Natural killer cell (primary cell): ENCODE measurements at regions of chr17 and their contacts with region 1.

Region 1: DNA sequence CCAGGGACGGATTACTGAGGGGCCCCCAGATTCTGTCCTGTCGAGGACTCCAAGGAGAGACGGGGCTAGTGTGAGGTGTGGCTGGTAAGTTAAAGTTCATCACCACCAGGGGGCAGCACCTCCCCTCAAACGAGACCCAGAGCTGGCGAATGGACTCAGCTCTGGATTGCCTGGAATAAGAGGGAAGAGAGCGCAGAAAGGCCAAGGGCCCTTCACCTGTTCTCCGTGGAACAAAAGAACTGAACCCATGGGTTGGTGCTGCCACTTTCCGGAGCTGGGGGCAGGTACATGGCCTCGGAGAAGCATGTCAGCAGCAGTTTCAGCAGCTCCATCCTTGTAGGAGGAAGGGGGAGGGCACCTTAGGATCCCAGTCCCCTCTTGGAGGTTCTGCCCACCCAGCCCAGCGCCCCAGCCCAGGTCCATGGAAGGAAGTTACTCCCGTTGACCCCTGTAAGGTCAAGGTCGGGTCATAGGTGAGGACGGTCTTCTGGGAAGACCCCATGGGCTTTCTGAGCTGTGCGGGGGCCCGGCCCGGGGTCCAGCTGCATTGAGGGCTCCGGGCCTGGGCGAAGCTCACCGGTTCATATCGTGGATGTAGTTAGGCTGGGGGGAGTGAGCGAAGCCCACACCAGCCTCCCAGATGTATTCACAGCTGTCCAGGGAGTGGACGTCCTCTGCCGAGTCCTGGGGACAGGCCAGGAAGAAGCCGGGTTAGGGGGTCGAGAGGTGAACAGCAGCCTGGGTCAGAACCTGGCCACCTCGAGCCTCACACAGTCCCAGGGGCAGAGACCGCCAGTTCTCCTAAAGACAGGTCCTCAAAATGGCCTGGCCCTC is 10.7 kb downstream of the HID1 start:
- DNase-seq: peak; percentile 76 to 92
- ATAC-seq: peak; percentile 75 to 80 (median 76)
- H3K4me3 ChIP-seq: no peak overlapping the region
- H3K4me3 Mint-ChIP-seq: no peak overlapping the region
- H3K27ac ChIP-seq: no peak overlapping the region
- H3K27ac Mint-ChIP-seq: no peak overlapping the region
- H3K4me1 ChIP-seq: peaks cover 8% of the 10 kb centered on the region
- H3K4me1 Mint-ChIP-seq: peaks cover 0 to 4% of the 10 kb centered on the region in 2 donors
- H3K27me3 ChIP-seq: no peaks in the 10 kb centered on the region
- H3K27me3 Mint-ChIP-seq: peaks cover 6 to 7% of the 10 kb centered on the region in 2 donors
- CTCF ChIP-seq: peak; percentile 89

Region 2: GRCh38 chr17:74790161-74791054 is 171.5 kb before region 1 on chr17:
- intact Hi-C with region 1: loop called (anchors 1 kb)
- DNase-seq: peak in 1 of 2 donors; percentile 33
- ATAC-seq: no peak
- H3K4me3 ChIP-seq: no peak overlapping the region
- H3K4me3 Mint-ChIP-seq: no peak overlapping the region
- H3K27ac ChIP-seq: no peak overlapping the region
- H3K27ac Mint-ChIP-seq: no peak overlapping the region
- H3K4me1 ChIP-seq: peaks cover 31% of the 10 kb centered on the region
- H3K4me1 Mint-ChIP-seq: peaks cover 12 to 25% of the 10 kb centered on the region in 2 donors
- H3K27me3 ChIP-seq: no peaks in the 10 kb centered on the region
- H3K27me3 Mint-ChIP-seq: no peaks in the 10 kb centered on the region
- CTCF ChIP-seq: no peak

Region 3: DNA sequence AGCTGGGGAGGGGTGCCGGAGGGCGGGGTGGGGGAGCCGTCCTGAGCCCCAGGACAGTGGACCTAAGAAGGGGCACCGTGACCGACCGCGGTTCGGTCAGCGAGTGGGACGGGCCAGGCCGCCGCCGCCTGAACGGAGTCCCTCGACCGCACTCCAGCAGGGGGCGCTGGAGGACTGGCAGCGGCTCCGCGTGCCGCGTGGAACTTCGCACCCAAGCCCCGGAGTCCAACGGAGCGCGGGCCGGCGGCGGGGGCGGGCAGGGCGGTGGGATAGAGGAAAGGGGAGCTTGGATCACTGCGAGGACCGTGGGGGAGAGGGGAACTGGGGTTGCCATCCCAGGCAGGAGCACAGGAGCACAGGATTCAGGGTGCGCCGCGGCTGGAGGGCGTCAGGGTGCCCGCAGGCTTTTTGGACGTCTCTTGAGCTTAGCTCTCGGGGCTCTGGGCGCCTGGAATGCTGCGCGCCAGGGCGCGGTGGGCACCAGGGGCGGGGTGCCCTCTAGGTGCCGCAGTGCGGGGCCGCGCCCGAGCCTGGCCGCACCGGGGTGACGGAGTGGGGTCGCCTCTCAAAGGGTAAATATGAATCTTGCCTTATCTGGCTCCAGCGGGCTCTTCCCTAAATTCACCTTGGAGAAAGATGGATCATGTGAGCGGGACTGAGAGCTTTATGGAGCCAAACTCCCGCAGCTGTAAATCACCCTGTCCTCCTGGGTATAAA is 38.2 kb before region 1 on chr17:
- intact Hi-C with region 1: loop called (anchors 5 kb)
- DNase-seq: peak; percentile 77 to 83
- ATAC-seq: peak; percentile 84 to 85 (median 84)
- H3K4me3 ChIP-seq: peak overlapping the region; percentile 20
- H3K4me3 Mint-ChIP-seq: no peak overlapping the region
- H3K27ac ChIP-seq: no peak overlapping the region
- H3K27ac Mint-ChIP-seq: no peak overlapping the region
- H3K4me1 ChIP-seq: peaks cover 23% of the 10 kb centered on the region
- H3K4me1 Mint-ChIP-seq: peaks cover 0 to 22% of the 10 kb centered on the region in 2 donors
- H3K27me3 ChIP-seq: peaks cover 37% of the 10 kb centered on the region
- H3K27me3 Mint-ChIP-seq: peaks cover 30 to 36% of the 10 kb centered on the region in 2 donors
- CTCF ChIP-seq: peak; percentile 88

Region 4: GRCh38 chr17:75012346-75013091 is 50.6 kb after region 1 on chr17 and contains the start of gene MRPL58:
- intact Hi-C with region 1: loop called (anchors 2 kb)
- DNase-seq: peak; percentile 81 to 88
- ATAC-seq: peak; percentile 93 to 95 (median 95)
- H3K4me3 ChIP-seq: peak within 1 kb of the TSS; percentile 76
- H3K4me3 Mint-ChIP-seq: peak within 1 kb of the TSS; percentile 95
- H3K27ac ChIP-seq: peak within 1 kb of the TSS; percentile 82
- H3K27ac Mint-ChIP-seq: peak within 1 kb of the TSS; percentile 88 to 95
- H3K4me1 ChIP-seq: peaks cover 16% of the 10 kb centered on the region
- H3K4me1 Mint-ChIP-seq: peaks cover 17 to 33% of the 10 kb centered on the region in 2 donors
- H3K27me3 ChIP-seq: no peaks in the 10 kb centered on the region
- H3K27me3 Mint-ChIP-seq: no peaks in the 10 kb centered on the region
- CTCF ChIP-seq: peak; percentile 59
- total RNA-seq, gene MRPL58: 9.0 to 15.7 (median 12.9) TPM

Region 5: GRCh38 chr17:75205037-75205792 is 243.3 kb after region 1 on chr17 and contains the start of gene NUP85:
- intact Hi-C with region 1: loop called (anchors 1 kb)
- DNase-seq: peak; percentile 90 to 95
- ATAC-seq: peak; percentile 92 to 96 (median 92)
- H3K4me3 ChIP-seq: peak within 1 kb of the TSS; percentile 84
- H3K4me3 Mint-ChIP-seq: peak within 1 kb of the TSS; percentile 96
- H3K27ac ChIP-seq: peak within 1 kb of the TSS; percentile 80
- H3K27ac Mint-ChIP-seq: peak within 1 kb of the TSS; percentile 93 to 97
- H3K4me1 ChIP-seq: peaks cover 20% of the 10 kb centered on the region
- H3K4me1 Mint-ChIP-seq: peaks cover 20 to 28% of the 10 kb centered on the region in 2 donors
- H3K27me3 ChIP-seq: no peaks in the 10 kb centered on the region
- H3K27me3 Mint-ChIP-seq: no peaks in the 10 kb centered on the region
- CTCF ChIP-seq: no peak
- total RNA-seq, gene NUP85: 71.1 to 78.1 (median 77.0) TPM

Region 6: DNA sequence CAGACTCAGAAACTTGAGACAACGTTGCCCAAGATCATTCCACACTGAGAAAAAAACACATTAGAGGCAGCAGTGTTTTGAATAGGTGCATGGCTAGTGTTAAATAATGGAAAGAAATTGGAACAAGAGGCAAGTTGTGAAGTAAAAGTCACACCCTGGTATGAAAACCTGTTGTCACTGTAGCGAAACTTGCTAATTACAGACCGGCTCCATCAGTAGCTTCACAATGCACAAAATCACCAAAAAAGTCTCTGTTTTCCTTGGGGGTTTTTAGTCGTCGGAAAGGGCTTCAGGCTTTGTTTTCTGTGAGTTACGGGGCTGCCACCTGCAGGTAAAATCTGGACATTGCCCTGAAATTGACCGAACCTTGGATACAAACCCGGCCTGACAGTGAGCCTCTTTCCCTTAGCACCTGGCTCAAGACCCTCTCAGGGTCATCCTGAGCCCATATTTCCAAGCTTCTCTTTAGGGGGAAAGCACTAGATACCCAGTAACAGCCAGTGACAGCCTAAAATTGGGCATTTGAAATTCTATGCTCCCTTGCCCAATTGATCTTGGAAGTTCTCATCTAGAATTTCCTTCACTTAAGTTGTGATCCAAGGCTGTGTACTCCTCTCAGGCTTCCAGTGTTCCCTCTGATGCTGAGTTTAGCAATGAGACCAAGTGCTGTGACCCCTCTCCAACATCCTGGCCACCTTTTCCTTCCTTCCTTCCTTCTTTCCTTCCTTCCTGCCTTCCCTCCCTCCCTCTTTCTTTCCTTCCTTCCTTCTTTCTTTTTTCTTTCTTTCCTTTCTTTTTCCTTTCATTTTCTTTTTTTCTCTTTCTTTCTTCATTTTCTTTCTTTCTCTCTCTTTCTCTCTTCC is 450.8 kb after region 1 on chr17:
- intact Hi-C with region 1: loop called (anchors 1 kb)
- DNase-seq: peak; percentile 72 to 91
- ATAC-seq: peak; percentile 83 to 96 (median 86)
- H3K4me3 ChIP-seq: no peak overlapping the region
- H3K4me3 Mint-ChIP-seq: peak overlapping the region; percentile 71
- H3K27ac ChIP-seq: no peak overlapping the region
- H3K27ac Mint-ChIP-seq: peak overlapping the region; percentile 23 to 69
- H3K4me1 ChIP-seq: peaks cover 9% of the 10 kb centered on the region
- H3K4me1 Mint-ChIP-seq: peaks cover 23 to 28% of the 10 kb centered on the region in 2 donors
- H3K27me3 ChIP-seq: no peaks in the 10 kb centered on the region
- H3K27me3 Mint-ChIP-seq: peaks cover 0 to 6% of the 10 kb centered on the region in 2 donors
- CTCF ChIP-seq: peak; percentile 69